HepG2 (cell line): ENCODE measurements at regions of chr16 and their contacts with region 1.

Region 1: DNA sequence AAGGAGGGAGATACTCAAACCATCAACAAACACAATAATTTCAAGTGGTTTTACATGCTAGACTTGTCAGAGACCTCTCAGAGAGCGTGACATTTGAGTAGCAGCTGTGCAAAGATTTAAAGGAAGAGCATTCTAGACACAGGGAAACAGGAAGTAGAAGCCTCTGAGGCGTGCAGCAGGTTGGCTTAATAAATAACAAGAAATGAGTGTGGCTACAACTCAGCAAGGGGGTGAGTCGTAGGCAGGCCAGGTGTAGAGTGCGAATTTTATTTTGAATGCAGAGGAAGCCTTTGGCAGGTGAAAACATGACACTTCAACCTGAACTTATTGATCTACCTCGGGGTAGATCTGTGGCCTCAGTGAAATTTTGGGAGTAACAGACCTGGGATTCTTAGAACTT is 73.2 kb upstream of the MRTFB start:
- DNase-seq: peak; percentile 48
- ATAC-seq: peak; percentile 66
- H3K4me3 ChIP-seq: peak overlapping the region in 1 of 3 experiments; percentile 27; a peak in 1 of 6 replicates
- H3K27ac ChIP-seq: no peak overlapping the region
- H3K4me1 ChIP-seq: peaks cover 50% of the 10 kb centered on the region
- H3K27me3 ChIP-seq: peaks cover 0 to 30% of the 10 kb centered on the region in 2 experiments; a peak in 4 of 5 replicates
- CTCF ChIP-seq: no peak
- EP300 ChIP-seq: no peak
- POLR2A ChIP-seq: no peak
- RAD21 ChIP-seq: no peak

Region 2: DNA sequence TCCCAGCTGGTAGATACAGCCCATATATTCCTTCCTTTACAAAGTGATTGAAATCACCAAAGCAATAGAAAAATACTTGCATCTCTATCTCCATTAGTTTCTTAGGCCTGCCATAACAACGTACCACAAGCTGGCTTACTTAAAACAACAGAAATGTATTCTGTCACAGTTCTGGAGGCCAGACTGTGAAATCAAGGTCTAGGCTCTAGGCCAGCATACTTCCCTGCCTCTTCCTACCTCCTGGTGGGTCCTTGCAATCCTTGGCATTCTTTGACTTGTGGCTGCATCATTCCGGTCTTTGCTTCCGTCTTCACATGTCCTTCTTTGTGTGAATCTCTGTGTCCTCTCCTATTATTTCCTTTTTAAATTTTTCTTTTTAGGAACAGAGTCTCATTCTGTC is 15.5 kb before region 1 on chr16:
- CTCF ChIA-PET with region 1: no interaction called
- POLR2A ChIA-PET with region 1: no interaction called
- in situ Hi-C with region 1: no loop called
- intact Hi-C with region 1: loop called (anchors 1 kb)
- DNase-seq: no peak
- ATAC-seq: no peak
- H3K4me3 ChIP-seq: no peak overlapping the region
- H3K27ac ChIP-seq: no peak overlapping the region
- H3K4me1 ChIP-seq: no peaks in the 10 kb centered on the region
- H3K27me3 ChIP-seq: no peaks in the 10 kb centered on the region
- CTCF ChIP-seq: no peak
- EP300 ChIP-seq: no peak
- POLR2A ChIP-seq: no peak
- RAD21 ChIP-seq: no peak